ENCODE measurements at regions of chrX and their contacts with region 1.

Region 1: GRCh38 chrX:17413228-17413627 is 38.2 kb downstream of the NHS start:
- DNase-seq: peak in 1 of 2 experiments; percentile 82
- H3K4me3 ChIP-seq: peak overlapping the region; percentile 44; the same call in 1 of the 2 replicates
- H3K27ac ChIP-seq: peak overlapping the region; percentile 90
- H3K4me1 ChIP-seq: peaks cover 48% of the 10 kb centered on the region
- H3K27me3 ChIP-seq: no peaks in the 10 kb centered on the region
- CTCF ChIP-seq: no peak

Region 2: DNA sequence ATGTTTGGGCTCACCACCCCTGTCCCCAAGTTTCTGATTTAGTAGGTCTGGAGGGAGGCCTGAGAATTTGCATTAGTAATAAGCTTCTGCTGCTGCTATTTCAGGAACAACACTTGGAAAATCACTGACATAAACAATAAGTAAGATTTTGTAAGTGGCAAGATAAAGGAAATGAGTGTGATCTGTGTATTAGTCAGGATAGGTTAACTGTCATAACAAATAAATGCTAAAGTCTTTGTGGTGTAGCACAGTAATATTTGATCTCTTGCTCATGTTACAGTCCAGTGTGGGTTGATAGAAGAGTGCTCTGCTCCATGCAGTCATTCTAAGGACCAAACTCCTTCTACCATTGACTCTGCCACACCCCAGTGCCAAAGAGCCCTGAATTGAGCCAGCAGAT is 28.7 kb after region 1 on chrX:
- CTCF ChIA-PET with region 1: no interaction called
- POLR2A ChIA-PET with region 1: no interaction called
- intact Hi-C with region 1: no loop called
- DNase-seq: no peak
- H3K4me3 ChIP-seq: no peak overlapping the region
- H3K27ac ChIP-seq: no peak overlapping the region
- H3K4me1 ChIP-seq: peaks cover 5% of the 10 kb centered on the region; the same call in 1 of the 2 replicates
- H3K27me3 ChIP-seq: no peaks in the 10 kb centered on the region
- CTCF ChIP-seq: no peak

Region 3: DNA sequence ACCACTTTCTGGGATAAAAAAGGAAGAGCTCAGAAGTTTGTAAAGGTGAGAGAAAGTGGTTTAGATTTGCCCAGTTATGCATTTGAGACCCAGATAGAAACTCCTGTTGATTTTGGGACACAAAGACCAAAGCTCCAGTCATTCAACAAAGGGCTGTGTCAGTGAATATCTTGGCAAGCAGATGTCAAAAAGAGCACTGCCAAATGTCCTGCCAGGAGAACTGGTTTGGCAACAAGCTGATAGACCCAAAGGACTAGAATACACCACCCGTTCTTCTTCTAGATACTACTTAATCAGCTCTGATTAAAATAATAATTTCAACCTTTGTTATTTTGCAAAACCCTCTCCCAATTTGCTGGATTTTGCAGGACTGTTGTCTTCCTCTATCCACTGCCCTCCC is 83.2 kb after region 1 on chrX:
- CTCF ChIA-PET with region 1: no interaction called
- POLR2A ChIA-PET with region 1: no interaction called
- intact Hi-C with region 1: loop called (anchors 5 kb)
- DNase-seq: peak; percentile 38 to 73
- H3K4me3 ChIP-seq: no peak overlapping the region
- H3K27ac ChIP-seq: peak overlapping the region; percentile 47
- H3K4me1 ChIP-seq: peaks cover 81% of the 10 kb centered on the region
- H3K27me3 ChIP-seq: no peaks in the 10 kb centered on the region
- CTCF ChIP-seq: no peak

Region 4: GRCh38 chrX:17521871-17522693 is 108.9 kb after region 1 on chrX:
- CTCF ChIA-PET with region 1: no interaction called
- POLR2A ChIA-PET with region 1: no interaction called
- intact Hi-C with region 1: loop called (anchors 10 kb)
- DNase-seq: peak; percentile 52 to 79
- H3K4me3 ChIP-seq: no peak overlapping the region
- H3K27ac ChIP-seq: peak overlapping the region; percentile 76
- H3K4me1 ChIP-seq: peaks cover 33% of the 10 kb centered on the region
- H3K27me3 ChIP-seq: no peaks in the 10 kb centered on the region
- CTCF ChIP-seq: no peak